HCT116 (cell line): ENCODE measurements at regions of chr10 and their contacts with region 1.

Region 1: DNA sequence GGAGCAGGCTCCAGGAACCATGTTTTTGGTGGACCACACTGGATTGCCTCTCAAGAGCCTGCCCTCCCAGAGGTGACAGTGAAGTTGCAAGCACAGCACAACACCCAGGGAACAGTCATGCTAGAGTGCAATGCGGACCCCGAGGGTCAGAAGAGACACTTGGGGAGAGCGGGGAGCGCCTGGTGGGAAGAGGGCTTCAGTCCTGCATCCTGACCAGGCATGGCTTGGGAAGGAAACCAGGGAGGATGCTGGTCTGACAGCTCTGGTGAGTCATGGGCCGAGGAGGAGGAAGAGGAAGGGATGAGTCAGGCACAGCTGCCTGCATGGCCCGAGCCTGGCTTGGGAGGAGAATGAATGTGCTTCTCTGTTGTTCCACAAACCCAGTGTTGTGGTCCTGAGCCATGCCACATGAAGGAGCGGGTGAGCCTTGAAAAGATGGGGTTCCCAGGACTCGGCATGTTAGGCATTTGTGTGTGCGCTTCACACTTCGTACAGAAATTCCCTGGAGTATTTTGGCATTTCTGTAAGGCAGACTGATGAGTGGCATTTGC is 29.5 kb upstream of the ANKRD2 start:
- DNase-seq: peak; percentile 85
- ATAC-seq: peak; percentile 77
- H3K4me3 ChIP-seq: peak overlapping the region in 1 of 2 experiments; percentile 57; a peak in 2 of 4 replicates
- H3K27ac ChIP-seq: peak overlapping the region; percentile 98
- H3K4me1 ChIP-seq: peaks cover 53 to 63% of the 10 kb centered on the region in 2 experiments
- H3K27me3 ChIP-seq: no peaks in the 10 kb centered on the region
- CTCF ChIP-seq: no peak
- POLR2A ChIP-seq: no peak
- RAD21 ChIP-seq: no peak

Region 2: DNA sequence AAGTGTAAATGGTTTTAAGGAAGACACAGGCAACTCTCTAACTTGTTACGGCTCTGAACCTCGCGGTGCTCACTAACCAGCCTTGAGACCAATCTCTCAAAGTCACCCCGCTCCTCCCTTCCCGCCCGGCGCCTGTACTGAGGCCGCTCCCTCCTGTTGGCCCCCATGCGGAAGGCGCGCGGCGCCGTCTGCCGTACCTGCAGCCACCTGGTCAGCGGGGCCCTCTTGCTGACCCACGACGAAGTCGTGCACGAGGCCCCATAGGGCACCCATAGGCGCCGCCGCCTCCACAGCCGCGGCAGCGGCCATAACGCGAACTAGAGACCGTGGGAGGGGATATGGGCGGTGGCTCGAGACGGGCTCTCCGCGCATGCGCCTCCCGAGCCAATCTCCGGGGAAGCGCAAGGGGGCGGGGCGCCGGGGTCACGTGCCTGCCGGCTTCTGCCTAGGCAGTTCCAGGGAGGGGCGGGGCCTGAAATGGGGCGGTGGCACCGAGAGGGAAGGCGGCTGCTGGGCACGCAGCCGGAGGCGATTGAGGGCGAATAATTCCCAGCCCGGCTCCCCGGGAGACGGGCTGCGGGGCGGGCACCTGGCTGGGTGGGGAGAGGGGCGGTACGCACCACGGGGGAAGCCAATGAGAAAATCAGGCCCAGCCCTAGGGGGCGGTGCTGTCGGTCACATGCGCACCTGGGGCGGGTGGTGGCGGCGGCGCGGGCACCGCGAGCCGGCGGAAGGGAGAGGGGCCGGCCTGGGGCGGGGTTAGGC is 44.8 kb before region 1 on chr10 and contains the start of gene MMS19:
- CTCF ChIA-PET with region 1: no interaction called
- POLR2A ChIA-PET with region 1: no interaction called
- RAD21 ChIA-PET with region 1: no interaction called
- intact Hi-C with region 1: loop called (anchors 2 kb)
- DNase-seq: peak; percentile 92
- ATAC-seq: peak; percentile 92
- H3K4me3 ChIP-seq: peak within 1 kb of the TSS; percentile 81 to 96
- H3K27ac ChIP-seq: peak within 1 kb of the TSS; percentile 94
- H3K4me1 ChIP-seq: peaks cover 9 to 17% of the 10 kb centered on the region in 2 experiments; a peak in 3 of 4 replicates
- H3K27me3 ChIP-seq: no peaks in the 10 kb centered on the region
- CTCF ChIP-seq: no peak
- POLR2A ChIP-seq: peak; percentile 43
- RAD21 ChIP-seq: no peak
- total RNA-seq, gene MMS19: 101 TPM

Region 3: DNA sequence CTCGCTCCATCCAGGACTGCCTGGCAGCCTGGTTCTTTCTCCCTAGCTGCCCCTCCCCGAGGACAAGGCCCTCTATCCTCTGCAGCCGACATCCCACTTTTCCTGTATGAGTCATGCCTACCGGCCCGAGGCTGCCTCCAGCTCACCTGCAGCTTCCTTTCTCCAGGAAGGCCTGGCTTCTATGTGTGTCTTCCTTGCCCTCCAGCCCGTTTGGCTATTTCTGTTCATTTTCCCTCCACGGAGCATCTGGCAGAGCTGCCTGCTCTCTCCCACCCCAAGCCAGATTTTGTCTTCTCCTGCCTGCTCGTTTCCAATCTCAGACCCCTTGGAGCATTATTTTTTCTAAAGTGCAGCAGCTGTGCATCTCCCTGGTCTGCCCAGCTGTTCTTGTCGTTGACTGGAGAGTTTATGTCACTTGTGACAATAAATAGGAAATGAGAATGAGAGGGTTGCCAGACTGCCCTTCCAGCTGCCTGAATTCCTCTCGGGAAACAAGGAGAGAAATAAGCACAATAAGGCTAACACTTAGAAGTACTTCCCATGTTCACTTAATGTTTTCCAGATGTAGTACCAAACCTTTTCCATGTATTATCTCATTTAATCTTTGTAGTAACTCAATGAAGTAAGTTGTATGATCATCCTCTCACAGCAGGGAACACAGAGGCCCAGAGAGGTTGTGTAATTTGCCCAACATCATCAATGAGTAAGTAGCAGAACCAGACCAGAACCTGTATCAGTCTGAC is 24.6 kb before region 1 on chr10:
- CTCF ChIA-PET with region 1: no interaction called
- POLR2A ChIA-PET with region 1: no interaction called
- RAD21 ChIA-PET with region 1: no interaction called
- intact Hi-C with region 1: no loop called
- DNase-seq: peak; percentile 27
- ATAC-seq: peak; percentile 91
- H3K4me3 ChIP-seq: peak overlapping the region in 1 of 2 experiments; percentile 28; a peak in 1 of 4 replicates
- H3K27ac ChIP-seq: peak overlapping the region; percentile 65
- H3K4me1 ChIP-seq: peaks cover 25 to 39% of the 10 kb centered on the region in 2 experiments
- H3K27me3 ChIP-seq: no peaks in the 10 kb centered on the region
- CTCF ChIP-seq: no peak
- POLR2A ChIP-seq: no peak
- RAD21 ChIP-seq: no peak

Region 4: GRCh38 chr10:97572214-97572989 is 29.3 kb after region 1 on chr10 and contains the start of gene ANKRD2:
- CTCF ChIA-PET with region 1: interaction called, 6 read pairs
- POLR2A ChIA-PET with region 1: no interaction called
- RAD21 ChIA-PET with region 1: interaction called in 1 of 2 experiments, 4 read pairs
- intact Hi-C with region 1: loop called (anchors 2 kb)
- DNase-seq: peak; percentile 59
- ATAC-seq: peak; percentile 78
- H3K4me3 ChIP-seq: peak within 1 kb of the TSS in 1 of 2 experiments; percentile 51; a peak in 2 of 4 replicates
- H3K27ac ChIP-seq: peak within 1 kb of the TSS; percentile 68
- H3K4me1 ChIP-seq: peaks cover 53 to 60% of the 10 kb centered on the region in 2 experiments
- H3K27me3 ChIP-seq: no peaks in the 10 kb centered on the region
- CTCF ChIP-seq: peak; percentile 85 to 97 (median 93)
- POLR2A ChIP-seq: no peak
- RAD21 ChIP-seq: peak; percentile 93
- total RNA-seq, gene ANKRD2: 0.15 TPM